ENCODE measurements at regions of chr14 and their contacts with region 1.

Region 1: GRCh38 chr14:67571272-67571850 is 28.7 kb downstream of the PIGH start:
- DNase-seq: no peak
- H3K4me3 ChIP-seq: no peak overlapping the region
- H3K27ac ChIP-seq: no peak overlapping the region
- H3K27me3 ChIP-seq: peaks cover 24% of the 10 kb centered on the region
- CTCF ChIP-seq: peak; percentile 94

Region 2: DNA sequence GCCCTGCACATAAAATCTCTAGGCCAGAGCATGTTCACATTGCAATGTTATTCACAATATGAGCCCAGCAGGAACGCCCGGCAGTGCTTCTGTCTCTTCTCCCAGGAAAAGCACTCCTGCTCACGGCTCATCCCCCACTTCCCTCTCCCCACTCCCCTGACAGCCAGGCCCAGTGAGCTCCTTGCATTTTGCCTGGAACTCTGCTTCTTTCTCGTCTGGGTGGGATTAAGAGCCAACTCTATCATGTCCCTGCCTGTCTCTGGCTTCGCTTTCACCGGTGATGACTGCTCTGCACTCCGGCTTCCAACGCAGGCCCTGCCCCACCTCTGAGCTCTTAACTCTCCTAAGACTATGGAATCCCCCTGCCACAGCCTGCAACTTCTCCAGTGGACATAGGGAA is 161.9 kb before region 1 on chr14:
- CTCF ChIA-PET with region 1: no interaction called
- POLR2A ChIA-PET with region 1: no interaction called
- DNase-seq: no peak
- H3K4me3 ChIP-seq: no peak overlapping the region
- H3K27ac ChIP-seq: no peak overlapping the region
- H3K27me3 ChIP-seq: no peaks in the 10 kb centered on the region
- CTCF ChIP-seq: no peak

Region 3: GRCh38 chr14:67426983-67427606 is 144.3 kb before region 1 on chr14:
- CTCF ChIA-PET with region 1: interaction called, 114 read pairs
- POLR2A ChIA-PET with region 1: no interaction called
- DNase-seq: peak; percentile 45
- H3K4me3 ChIP-seq: no peak overlapping the region
- H3K27ac ChIP-seq: no peak overlapping the region
- H3K27me3 ChIP-seq: peaks cover 10% of the 10 kb centered on the region
- CTCF ChIP-seq: peak; percentile 86

Region 4: GRCh38 chr14:67526676-67527459 is 44.5 kb before region 1 on chr14:
- CTCF ChIA-PET with region 1: interaction called, 55 read pairs
- POLR2A ChIA-PET with region 1: no interaction called
- DNase-seq: no peak
- H3K4me3 ChIP-seq: no peak overlapping the region
- H3K27ac ChIP-seq: no peak overlapping the region
- H3K27me3 ChIP-seq: peaks cover 38% of the 10 kb centered on the region
- CTCF ChIP-seq: peak; percentile 72

Region 5: GRCh38 chr14:67557126-67557525 is 14.2 kb before region 1 on chr14:
- CTCF ChIA-PET with region 1: interaction called, 20 read pairs
- POLR2A ChIA-PET with region 1: no interaction called
- DNase-seq: no peak
- H3K4me3 ChIP-seq: no peak overlapping the region
- H3K27ac ChIP-seq: no peak overlapping the region
- H3K27me3 ChIP-seq: peaks cover 4% of the 10 kb centered on the region
- CTCF ChIP-seq: no peak

Region 6: DNA sequence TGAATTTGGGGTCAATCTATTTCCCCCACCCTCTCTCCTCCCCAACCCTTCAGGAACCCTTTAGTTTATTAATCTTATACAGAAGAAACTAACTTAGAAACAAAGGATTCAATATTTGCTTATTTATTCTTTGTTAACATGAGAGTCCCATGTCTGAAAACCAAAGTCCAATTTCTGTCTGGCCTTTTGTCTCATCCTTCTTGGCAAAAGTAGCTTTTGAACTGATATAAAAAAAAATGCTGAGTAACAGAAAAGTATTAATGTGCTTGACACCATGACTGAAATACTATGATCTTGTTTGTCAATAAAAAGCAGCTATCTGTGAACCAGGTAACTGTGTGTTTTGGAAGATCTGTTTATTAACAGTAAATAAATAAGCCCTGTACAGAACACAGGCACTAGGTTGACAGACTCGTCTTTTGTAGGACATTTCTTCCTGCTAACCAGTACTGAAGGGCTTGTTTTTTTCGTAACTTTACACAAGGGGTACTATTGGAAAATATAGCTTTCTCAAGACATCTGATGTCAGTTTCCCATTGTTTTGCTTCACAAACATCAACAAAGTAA is 17.9 kb after region 1 on chr14:
- CTCF ChIA-PET with region 1: interaction called, 37 read pairs
- POLR2A ChIA-PET with region 1: no interaction called
- DNase-seq: no peak
- H3K4me3 ChIP-seq: no peak overlapping the region
- H3K27ac ChIP-seq: no peak overlapping the region
- H3K27me3 ChIP-seq: no peaks in the 10 kb centered on the region
- CTCF ChIP-seq: no peak